ENCODE measurements at regions of chr17 and their contacts with region 1.

Region 1: GRCh38 chr17:31900877-31901276 is 631 bp downstream of the UTP6 start:
- DNase-seq: no peak
- H3K4me3 ChIP-seq: peak overlapping the region; percentile 54 to 99
- H3K4me3 Mint-ChIP-seq: no peak overlapping the region
- H3K27ac ChIP-seq: peak overlapping the region; percentile 79
- H3K27ac Mint-ChIP-seq: peak overlapping the region in 1 of 7 donors; percentile 55
- H3K4me1 ChIP-seq: peaks cover 20% of the 10 kb centered on the region
- H3K4me1 Mint-ChIP-seq: peaks cover 0 to 9% (median 7%) of the 10 kb centered on the region in 4 donors
- H3K27me3 ChIP-seq: no peaks in the 10 kb centered on the region
- H3K27me3 Mint-ChIP-seq: no peaks in the 10 kb centered on the region

Region 2: GRCh38 chr17:31627960-31628359 is 272.9 kb before region 1 on chr17:
- CTCF ChIA-PET with region 1: no interaction called
- POLR2A ChIA-PET with region 1: no interaction called
- intact Hi-C with region 1: no loop called
- DNase-seq: no peak
- H3K4me3 ChIP-seq: no peak overlapping the region
- H3K4me3 Mint-ChIP-seq: no peak overlapping the region
- H3K27ac ChIP-seq: no peak overlapping the region
- H3K27ac Mint-ChIP-seq: no peak overlapping the region
- H3K4me1 ChIP-seq: no peaks in the 10 kb centered on the region
- H3K4me1 Mint-ChIP-seq: peaks cover 0 to 1% (median 0%) of the 10 kb centered on the region in 4 donors
- H3K27me3 ChIP-seq: peaks cover 11% of the 10 kb centered on the region
- H3K27me3 Mint-ChIP-seq: peaks cover 16 to 38% of the 10 kb centered on the region in 2 donors

Region 3: DNA sequence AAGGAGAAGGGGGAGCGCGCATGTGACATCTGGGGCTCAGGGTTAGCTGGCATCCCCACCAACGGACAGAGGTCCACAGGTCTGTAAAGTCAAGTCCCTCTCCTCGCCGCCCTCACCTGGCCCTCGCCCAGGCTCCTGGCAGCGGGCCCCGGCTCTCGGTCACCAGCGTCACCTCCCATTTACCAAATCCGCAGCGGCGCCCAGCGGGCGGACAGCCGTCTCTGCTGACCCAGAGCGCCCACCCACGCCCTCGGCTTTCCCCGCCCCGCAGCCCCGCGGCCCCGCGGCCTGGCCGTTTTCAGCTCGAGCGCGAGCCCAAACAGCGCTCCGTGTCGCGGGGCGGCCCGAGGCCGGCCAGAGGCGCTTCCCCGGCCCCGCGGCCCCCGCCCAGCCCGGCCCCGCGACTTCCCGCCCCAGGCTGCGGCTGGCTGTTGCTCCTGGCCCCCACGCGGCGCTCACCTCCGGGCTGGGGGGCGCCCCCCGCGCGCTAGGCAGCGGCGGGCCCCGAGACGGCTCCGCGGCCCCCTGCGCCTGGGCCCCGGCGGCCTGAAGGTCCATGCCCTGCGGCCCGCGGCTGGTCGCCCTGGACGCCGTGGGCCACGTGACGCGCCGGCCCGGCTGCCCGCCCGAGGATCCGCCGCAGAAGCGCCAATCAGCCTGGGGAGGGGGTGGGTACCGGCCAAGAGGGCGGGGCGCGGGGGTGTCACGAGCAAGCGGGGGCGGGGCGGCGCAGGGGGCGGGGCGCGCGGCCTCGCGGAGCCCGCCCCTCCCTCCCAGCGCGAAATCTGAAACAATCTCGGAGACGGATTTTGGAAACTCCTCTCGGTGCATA is 42.0 kb before region 1 on chr17 and contains the start of gene COPRS:
- CTCF ChIA-PET with region 1: no interaction called
- POLR2A ChIA-PET with region 1: interaction called, 4 read pairs
- intact Hi-C with region 1: loop called (anchors 1 kb)
- DNase-seq: peak; percentile 71 to 78 (median 74)
- H3K4me3 ChIP-seq: peak within 1 kb of the TSS in 1 of 2 donors; percentile 65
- H3K4me3 Mint-ChIP-seq: peak within 1 kb of the TSS; percentile 85 to 91 (median 87)
- H3K27ac ChIP-seq: peak within 1 kb of the TSS; percentile 26
- H3K27ac Mint-ChIP-seq: peak within 1 kb of the TSS; percentile 29 to 89 (median 79)
- H3K4me1 ChIP-seq: peaks cover 14% of the 10 kb centered on the region
- H3K4me1 Mint-ChIP-seq: peaks cover 12 to 22% (median 14%) of the 10 kb centered on the region in 4 donors
- H3K27me3 ChIP-seq: no peaks in the 10 kb centered on the region
- H3K27me3 Mint-ChIP-seq: no peaks in the 10 kb centered on the region
- total RNA-seq, gene COPRS: 3.3 to 3.6 TPM

Region 4: DNA sequence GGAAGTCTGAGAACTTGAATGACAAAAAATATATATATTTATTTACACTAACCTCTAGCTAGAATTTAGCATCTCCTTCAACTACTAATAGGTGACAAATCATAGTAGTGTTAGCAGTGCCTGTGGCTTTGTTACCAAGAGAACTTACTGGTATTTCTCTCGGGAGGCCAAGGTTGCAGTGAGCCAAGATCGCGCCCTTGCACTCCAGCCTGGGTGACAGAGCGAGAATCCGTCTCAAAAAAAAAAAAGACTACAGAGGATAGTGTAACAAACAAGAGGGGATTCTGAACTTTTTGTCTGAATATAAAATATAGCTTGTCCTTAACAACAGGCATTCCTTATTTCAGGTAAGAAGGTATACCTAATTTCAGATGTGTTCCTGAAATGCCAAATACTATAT is 34.6 kb after region 1 on chr17:
- CTCF ChIA-PET with region 1: interaction called, 6 read pairs
- POLR2A ChIA-PET with region 1: interaction called, 3 read pairs
- intact Hi-C with region 1: loop called (anchors 1 kb)
- DNase-seq: no peak
- H3K4me3 ChIP-seq: no peak overlapping the region
- H3K4me3 Mint-ChIP-seq: peak overlapping the region in 7 of 8 donors; percentile 8 to 94 (median 90)
- H3K27ac ChIP-seq: no peak overlapping the region
- H3K27ac Mint-ChIP-seq: peak overlapping the region in 2 of 7 donors; percentile 9 to 84
- H3K4me1 ChIP-seq: peaks cover 19% of the 10 kb centered on the region
- H3K4me1 Mint-ChIP-seq: peaks cover 8 to 24% (median 18%) of the 10 kb centered on the region in 4 donors
- H3K27me3 ChIP-seq: no peaks in the 10 kb centered on the region
- H3K27me3 Mint-ChIP-seq: no peaks in the 10 kb centered on the region

Measured in CD4-positive, alpha-beta memory T cell (primary cell).